Caco-2 (cell line): ENCODE measurements at regions of chr11 and their contacts with region 1.

Region 1: GRCh38 chr11:97140885-97141494 is 751.2 kb downstream of the JRKL start:
- DNase-seq: peak in 1 of 2 experiments; percentile 55
- H3K4me3 ChIP-seq: no peak overlapping the region
- H3K4me3 Mint-ChIP-seq: no peak overlapping the region
- H3K27ac Mint-ChIP-seq: no peak overlapping the region
- H3K4me1 ChIP-seq: no peaks in the 10 kb centered on the region
- H3K4me1 Mint-ChIP-seq: no peaks in the 10 kb centered on the region
- H3K27me3 ChIP-seq: no peaks in the 10 kb centered on the region
- H3K27me3 Mint-ChIP-seq: no peaks in the 10 kb centered on the region
- CTCF ChIP-seq: peak; percentile 78 to 82

Region 2: GRCh38 chr11:96635655-96636054 is 505.3 kb before region 1 on chr11:
- CTCF ChIA-PET with region 1: no interaction called
- POLR2A ChIA-PET with region 1: no interaction called
- intact Hi-C with region 1: no loop called
- DNase-seq: no peak
- H3K4me3 ChIP-seq: no peak overlapping the region
- H3K4me3 Mint-ChIP-seq: no peak overlapping the region
- H3K27ac Mint-ChIP-seq: no peak overlapping the region
- H3K4me1 ChIP-seq: peaks cover 11% of the 10 kb centered on the region
- H3K4me1 Mint-ChIP-seq: peaks cover 22% of the 10 kb centered on the region
- H3K27me3 ChIP-seq: no peaks in the 10 kb centered on the region
- H3K27me3 Mint-ChIP-seq: no peaks in the 10 kb centered on the region
- CTCF ChIP-seq: no peak

Region 3: GRCh38 chr11:96704847-96705246 is 436.1 kb before region 1 on chr11:
- CTCF ChIA-PET with region 1: no interaction called
- POLR2A ChIA-PET with region 1: no interaction called
- intact Hi-C with region 1: loop called (anchors 2 kb)
- DNase-seq: peak in 1 of 2 experiments; percentile 20
- H3K4me3 ChIP-seq: no peak overlapping the region
- H3K4me3 Mint-ChIP-seq: no peak overlapping the region
- H3K27ac Mint-ChIP-seq: no peak overlapping the region
- H3K4me1 ChIP-seq: no peaks in the 10 kb centered on the region
- H3K4me1 Mint-ChIP-seq: no peaks in the 10 kb centered on the region
- H3K27me3 ChIP-seq: no peaks in the 10 kb centered on the region
- H3K27me3 Mint-ChIP-seq: peaks cover 16% of the 10 kb centered on the region
- CTCF ChIP-seq: peak in 1 of 2 experiments; percentile 41

Region 4: GRCh38 chr11:96827164-96827563 is 313.8 kb before region 1 on chr11:
- CTCF ChIA-PET with region 1: interaction called, 7 read pairs
- POLR2A ChIA-PET with region 1: no interaction called
- intact Hi-C with region 1: loop called (anchors 1 kb)
- DNase-seq: peak in 1 of 2 experiments; percentile 19
- H3K4me3 ChIP-seq: no peak overlapping the region
- H3K4me3 Mint-ChIP-seq: no peak overlapping the region
- H3K27ac Mint-ChIP-seq: no peak overlapping the region
- H3K4me1 ChIP-seq: no peaks in the 10 kb centered on the region
- H3K4me1 Mint-ChIP-seq: no peaks in the 10 kb centered on the region
- H3K27me3 ChIP-seq: no peaks in the 10 kb centered on the region; the same call in 1 of the 2 replicates
- H3K27me3 Mint-ChIP-seq: peaks cover 14% of the 10 kb centered on the region
- CTCF ChIP-seq: no peak

Region 5: GRCh38 chr11:96943970-96944369 is 197.0 kb before region 1 on chr11:
- CTCF ChIA-PET with region 1: interaction called, 3 read pairs
- POLR2A ChIA-PET with region 1: no interaction called
- intact Hi-C with region 1: loop called (anchors 2 kb)
- DNase-seq: no peak
- H3K4me3 ChIP-seq: no peak overlapping the region
- H3K4me3 Mint-ChIP-seq: no peak overlapping the region
- H3K27ac Mint-ChIP-seq: no peak overlapping the region
- H3K4me1 ChIP-seq: no peaks in the 10 kb centered on the region
- H3K4me1 Mint-ChIP-seq: no peaks in the 10 kb centered on the region
- H3K27me3 ChIP-seq: no peaks in the 10 kb centered on the region
- H3K27me3 Mint-ChIP-seq: peaks cover 9% of the 10 kb centered on the region
- CTCF ChIP-seq: peak; percentile 38 to 44

Region 6: DNA sequence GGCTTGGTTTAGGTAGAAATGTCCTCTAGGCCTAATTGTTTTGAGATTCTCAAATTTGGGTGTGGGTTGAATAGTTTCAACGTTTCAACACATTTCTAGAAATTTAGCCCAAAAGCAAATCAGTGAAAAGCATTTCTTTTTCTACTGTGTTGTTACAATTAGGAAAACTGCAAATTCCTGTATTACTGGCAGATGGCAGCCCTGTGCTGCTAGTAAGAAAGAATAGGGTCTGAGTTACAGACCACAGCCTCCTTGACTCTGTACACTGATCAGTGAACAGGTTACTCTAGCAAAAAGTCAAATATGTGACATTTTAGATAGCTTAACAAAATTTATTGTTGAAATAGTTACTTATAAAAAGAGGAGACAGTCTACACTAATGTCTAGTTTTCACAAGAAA is 48.2 kb before region 1 on chr11:
- CTCF ChIA-PET with region 1: interaction called, 3 read pairs
- POLR2A ChIA-PET with region 1: no interaction called
- intact Hi-C with region 1: loop called (anchors 1 kb)
- DNase-seq: no peak
- H3K4me3 ChIP-seq: no peak overlapping the region
- H3K4me3 Mint-ChIP-seq: no peak overlapping the region
- H3K27ac Mint-ChIP-seq: no peak overlapping the region
- H3K4me1 ChIP-seq: no peaks in the 10 kb centered on the region
- H3K4me1 Mint-ChIP-seq: no peaks in the 10 kb centered on the region
- H3K27me3 ChIP-seq: no peaks in the 10 kb centered on the region
- H3K27me3 Mint-ChIP-seq: no peaks in the 10 kb centered on the region
- CTCF ChIP-seq: peak in 1 of 2 experiments; percentile 13